Ovary (tissue), 10 donors: ENCODE measurements at regions of chr19 and their contacts with region 1.

Region 1: GRCh38 chr19:15154002-15154612 is 46.7 kb downstream of the NOTCH3 start:
- DNase-seq: no peak
- H3K4me3 ChIP-seq: no peak overlapping the region
- H3K27ac ChIP-seq: no peak overlapping the region
- H3K4me1 ChIP-seq: no peaks in the 10 kb centered on the region
- H3K27me3 ChIP-seq: no peaks in the 10 kb centered on the region
- CTCF ChIP-seq: no peak
- EP300 ChIP-seq: no peak
- POLR2A ChIP-seq: no peak

Region 2: GRCh38 chr19:15081911-15082310 is 72.2 kb before region 1 on chr19 and contains the start of gene OR1I1:
- intact Hi-C with region 1: no loop called
- DNase-seq: no peak
- H3K4me3 ChIP-seq: no peak within 1 kb of the TSS
- H3K27ac ChIP-seq: no peak within 1 kb of the TSS
- H3K4me1 ChIP-seq: no peaks in the 10 kb centered on the region
- H3K27me3 ChIP-seq: no peaks in the 10 kb centered on the region
- CTCF ChIP-seq: no peak
- EP300 ChIP-seq: no peak
- POLR2A ChIP-seq: no peak
- total RNA-seq, gene OR1I1: not detected

Region 3: DNA sequence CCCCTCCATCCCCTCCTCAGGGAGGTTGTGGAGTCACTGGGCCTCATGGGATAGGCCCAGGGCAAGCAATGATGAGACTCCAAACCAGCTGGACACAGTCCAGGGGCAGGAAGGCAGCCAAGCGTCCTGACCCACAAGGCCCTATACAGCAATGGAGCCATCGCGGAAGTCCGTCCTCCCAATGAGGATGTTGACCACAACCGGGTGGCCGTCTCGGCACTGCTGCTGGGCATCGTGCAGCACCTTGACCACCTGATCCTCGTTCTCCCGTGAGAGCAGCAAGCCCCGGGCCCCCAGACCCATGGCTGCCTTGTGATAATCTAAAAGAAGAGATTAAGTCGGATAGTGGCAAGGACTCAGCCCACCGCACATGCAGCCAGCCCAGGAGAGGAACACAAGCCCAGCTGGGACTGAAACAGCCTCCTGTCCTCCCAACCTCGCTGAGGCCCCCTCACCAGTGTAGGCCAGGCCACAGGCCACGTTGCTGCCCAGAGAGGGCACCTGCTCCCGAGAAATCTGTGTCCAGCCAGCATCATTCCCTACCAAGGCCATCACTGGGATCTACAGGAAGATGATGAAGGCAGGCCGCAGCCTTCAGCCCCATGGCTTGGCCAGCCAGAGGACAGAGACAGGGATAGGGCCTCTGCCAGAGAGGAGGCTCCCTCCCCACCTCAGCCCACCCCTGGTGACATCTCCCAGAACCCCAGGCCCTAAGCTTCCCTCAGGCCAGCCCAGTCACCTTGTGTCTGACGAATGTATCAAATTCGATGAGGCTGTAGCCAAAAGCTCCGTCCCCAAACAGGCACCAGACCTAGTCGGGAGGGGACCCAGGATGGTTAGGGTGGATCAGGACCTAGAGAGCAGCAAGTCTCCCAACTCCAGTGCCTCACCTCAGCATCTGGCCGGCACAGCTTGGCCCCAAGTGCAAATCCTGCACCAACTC is 38.7 kb before region 1 on chr19:
- intact Hi-C with region 1: no loop called
- DNase-seq: peak; percentile 76 to 88 (median 76)
- H3K4me3 ChIP-seq: no peak overlapping the region
- H3K27ac ChIP-seq: peak overlapping the region in 1 of 2 donors; percentile 30
- H3K4me1 ChIP-seq: no peaks in the 10 kb centered on the region
- H3K27me3 ChIP-seq: no peaks in the 10 kb centered on the region
- CTCF ChIP-seq: no peak
- EP300 ChIP-seq: no peak
- POLR2A ChIP-seq: no peak

Region 4: GRCh38 chr19:15222738-15223648 is 68.9 kb after region 1 on chr19:
- intact Hi-C with region 1: no loop called
- DNase-seq: peak; percentile 92 to 94 (median 94)
- H3K4me3 ChIP-seq: peak overlapping the region; percentile 58
- H3K27ac ChIP-seq: no peak overlapping the region
- H3K4me1 ChIP-seq: peaks cover 7% of the 10 kb centered on the region
- H3K27me3 ChIP-seq: no peaks in the 10 kb centered on the region
- CTCF ChIP-seq: no peak
- EP300 ChIP-seq: no peak
- POLR2A ChIP-seq: no peak

Region 5: DNA sequence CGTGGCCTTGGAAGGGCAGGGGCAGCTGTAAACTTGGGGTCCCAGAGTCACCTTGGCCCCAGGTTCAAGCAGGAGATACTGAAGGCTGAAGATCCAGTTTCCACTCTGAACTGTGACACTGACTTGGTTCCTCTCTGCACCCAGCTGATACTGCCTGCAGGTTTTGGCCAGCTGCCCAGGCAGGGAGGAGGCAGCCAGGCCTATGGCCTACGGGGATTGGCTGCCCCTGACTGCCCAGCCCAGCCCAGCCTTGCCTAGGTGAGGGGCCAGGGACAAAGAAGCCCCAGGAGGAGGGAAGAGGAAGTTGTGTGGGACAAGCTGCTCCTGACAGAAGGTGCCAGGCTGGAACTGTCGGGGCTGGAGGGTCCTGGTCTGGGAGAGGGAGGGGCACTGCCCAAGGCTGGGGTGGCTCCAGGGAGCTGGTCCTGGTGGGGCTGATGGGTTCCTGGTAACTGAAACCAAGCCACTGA is 409.3 kb after region 1 on chr19:
- intact Hi-C with region 1: loop called in 1 of 4 experiments (anchors 5 kb)
- DNase-seq: peak; percentile 46 to 78 (median 67)
- H3K4me3 ChIP-seq: no peak overlapping the region
- H3K27ac ChIP-seq: no peak overlapping the region
- H3K4me1 ChIP-seq: peaks cover 6% of the 10 kb centered on the region
- H3K27me3 ChIP-seq: no peaks in the 10 kb centered on the region
- CTCF ChIP-seq: no peak
- EP300 ChIP-seq: no peak
- POLR2A ChIP-seq: no peak